PC-9 (cell line): ENCODE measurements at regions of chr14 and their contacts with region 1.

Region 1: GRCh38 chr14:31770271-31770670 is 209.1 kb downstream of the NUBPL start:
- DNase-seq: no peak
- H3K4me3 ChIP-seq: no peak overlapping the region
- H3K27ac ChIP-seq: no peak overlapping the region
- H3K4me1 ChIP-seq: no peaks in the 10 kb centered on the region
- H3K27me3 ChIP-seq: no peaks in the 10 kb centered on the region
- CTCF ChIP-seq: no peak

Region 2: DNA sequence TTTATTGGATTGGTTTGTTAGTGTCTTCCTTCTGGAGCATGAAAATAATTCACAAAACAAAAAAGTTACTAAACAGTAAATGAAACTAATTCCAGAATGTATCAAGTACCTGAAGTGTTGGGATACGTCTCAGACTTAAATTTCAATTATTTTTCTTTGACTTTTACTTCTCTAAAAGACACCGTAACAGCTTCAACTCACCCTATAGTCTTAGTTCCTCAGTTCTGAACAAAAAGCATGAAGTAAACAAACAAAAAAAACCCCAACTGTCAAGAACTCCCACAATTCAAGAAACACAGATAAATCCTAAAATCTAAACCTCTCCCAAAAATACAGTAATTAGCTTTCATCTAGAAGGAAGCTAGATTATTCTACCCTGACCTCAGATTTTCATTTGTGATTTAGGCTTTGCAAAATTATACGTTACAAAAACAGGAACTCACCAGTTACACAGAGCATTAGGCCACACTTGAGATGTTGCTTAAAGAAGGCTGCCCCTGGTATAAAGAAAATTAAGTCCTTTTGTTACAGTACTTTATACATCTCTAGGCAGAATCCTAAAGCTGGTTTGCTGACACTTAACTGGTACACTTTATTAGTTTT is 360.1 kb before region 1 on chr14:
- CTCF ChIA-PET with region 1: no interaction called
- POLR2A ChIA-PET with region 1: no interaction called
- intact Hi-C with region 1: no loop called
- DNase-seq: no peak
- H3K4me3 ChIP-seq: no peak overlapping the region
- H3K27ac ChIP-seq: no peak overlapping the region
- H3K4me1 ChIP-seq: peaks cover 14% of the 10 kb centered on the region; the same call in 1 of the 2 replicates
- H3K27me3 ChIP-seq: no peaks in the 10 kb centered on the region
- CTCF ChIP-seq: no peak

Region 3: GRCh38 chr14:31668348-31668747 is 101.9 kb before region 1 on chr14:
- CTCF ChIA-PET with region 1: no interaction called
- POLR2A ChIA-PET with region 1: no interaction called
- intact Hi-C with region 1: no loop called
- DNase-seq: no peak
- H3K4me3 ChIP-seq: no peak overlapping the region
- H3K27ac ChIP-seq: no peak overlapping the region
- H3K4me1 ChIP-seq: no peaks in the 10 kb centered on the region
- H3K27me3 ChIP-seq: no peaks in the 10 kb centered on the region
- CTCF ChIP-seq: no peak

Region 4: GRCh38 chr14:31736804-31737203 is 33.5 kb before region 1 on chr14:
- CTCF ChIA-PET with region 1: no interaction called
- POLR2A ChIA-PET with region 1: interaction called, 10 read pairs
- intact Hi-C with region 1: no loop called
- DNase-seq: no peak
- H3K4me3 ChIP-seq: no peak overlapping the region
- H3K27ac ChIP-seq: no peak overlapping the region
- H3K4me1 ChIP-seq: no peaks in the 10 kb centered on the region
- H3K27me3 ChIP-seq: no peaks in the 10 kb centered on the region
- CTCF ChIP-seq: no peak